WTC11 (cell line): ENCODE measurements at regions of chr3 and their contacts with region 1.

Region 1: GRCh38 chr3:107271787-107272387 is 105.4 kb upstream of the CCDC54 start:
- DNase-seq: no peak
- ATAC-seq: peak; percentile 67
- H3K4me3 Mint-ChIP-seq: no peak overlapping the region
- H3K27ac Mint-ChIP-seq: no peak overlapping the region
- H3K4me1 Mint-ChIP-seq: peaks cover 9% of the 10 kb centered on the region
- H3K27me3 Mint-ChIP-seq: no peaks in the 10 kb centered on the region; the same call in 1 of the 2 replicates
- CTCF ChIP-seq: peak; percentile 57

Region 2: GRCh38 chr3:107222907-107223306 is 49.0 kb before region 1 on chr3:
- CTCF ChIA-PET with region 1: no interaction called
- POLR2A ChIA-PET with region 1: no interaction called
- DNase-seq: no peak
- ATAC-seq: no peak
- H3K4me3 Mint-ChIP-seq: no peak overlapping the region
- H3K27ac Mint-ChIP-seq: no peak overlapping the region
- H3K4me1 Mint-ChIP-seq: no peaks in the 10 kb centered on the region
- H3K27me3 Mint-ChIP-seq: no peaks in the 10 kb centered on the region
- CTCF ChIP-seq: no peak

Region 3: GRCh38 chr3:107284612-107285011 is 12.7 kb after region 1 on chr3:
- CTCF ChIA-PET with region 1: interaction called, 14 read pairs
- POLR2A ChIA-PET with region 1: no interaction called
- DNase-seq: no peak
- ATAC-seq: peak; percentile 4; the same call in 1 of the 2 replicates
- H3K4me3 Mint-ChIP-seq: no peak overlapping the region
- H3K27ac Mint-ChIP-seq: peak overlapping the region; percentile 98
- H3K4me1 Mint-ChIP-seq: peaks cover 37% of the 10 kb centered on the region
- H3K27me3 Mint-ChIP-seq: no peaks in the 10 kb centered on the region; the same call in 1 of the 2 replicates
- CTCF ChIP-seq: no peak

Region 4: GRCh38 chr3:107412376-107412775 is 140.5 kb after region 1 on chr3:
- CTCF ChIA-PET with region 1: interaction called, 13 read pairs
- POLR2A ChIA-PET with region 1: interaction called, 3 read pairs
- DNase-seq: no peak
- ATAC-seq: no peak
- H3K4me3 Mint-ChIP-seq: no peak overlapping the region
- H3K27ac Mint-ChIP-seq: no peak overlapping the region
- H3K4me1 Mint-ChIP-seq: no peaks in the 10 kb centered on the region
- H3K27me3 Mint-ChIP-seq: no peaks in the 10 kb centered on the region
- CTCF ChIP-seq: no peak

Region 5: GRCh38 chr3:107458871-107459270 is 187.0 kb after region 1 on chr3:
- CTCF ChIA-PET with region 1: no interaction called
- POLR2A ChIA-PET with region 1: no interaction called
- DNase-seq: no peak
- ATAC-seq: no peak
- H3K4me3 Mint-ChIP-seq: no peak overlapping the region
- H3K27ac Mint-ChIP-seq: no peak overlapping the region
- H3K4me1 Mint-ChIP-seq: peaks cover 14% of the 10 kb centered on the region
- H3K27me3 Mint-ChIP-seq: no peaks in the 10 kb centered on the region
- CTCF ChIP-seq: no peak